ENCODE measurements at regions of chr18 and their contacts with region 1.

Region 1: GRCh38 chr18:63444567-63444966 is 22.3 kb upstream of the VPS4B start:
- DNase-seq: no peak
- ATAC-seq: peak in 1 of 4 donors; percentile 77
- H3K4me3 ChIP-seq: no peak overlapping the region
- H3K27ac ChIP-seq: no peak overlapping the region
- H3K4me1 ChIP-seq: no peaks in the 10 kb centered on the region
- H3K27me3 ChIP-seq: no peaks in the 10 kb centered on the region
- CTCF ChIP-seq: no peak

Region 2: GRCh38 chr18:63016270-63016669 is 428.3 kb before region 1 on chr18:
- intact Hi-C with region 1: loop called in 1 of 3 experiments (anchors 10 kb)
- DNase-seq: peak in 1 of 6 donors; percentile 46
- ATAC-seq: peak in 3 of 4 donors; percentile 83 to 90 (median 87)
- H3K4me3 ChIP-seq: no peak overlapping the region
- H3K27ac ChIP-seq: no peak overlapping the region
- H3K4me1 ChIP-seq: no peaks in the 10 kb centered on the region
- H3K27me3 ChIP-seq: no peaks in the 10 kb centered on the region
- CTCF ChIP-seq: peak; percentile 41 to 71 (median 58)

Region 3: DNA sequence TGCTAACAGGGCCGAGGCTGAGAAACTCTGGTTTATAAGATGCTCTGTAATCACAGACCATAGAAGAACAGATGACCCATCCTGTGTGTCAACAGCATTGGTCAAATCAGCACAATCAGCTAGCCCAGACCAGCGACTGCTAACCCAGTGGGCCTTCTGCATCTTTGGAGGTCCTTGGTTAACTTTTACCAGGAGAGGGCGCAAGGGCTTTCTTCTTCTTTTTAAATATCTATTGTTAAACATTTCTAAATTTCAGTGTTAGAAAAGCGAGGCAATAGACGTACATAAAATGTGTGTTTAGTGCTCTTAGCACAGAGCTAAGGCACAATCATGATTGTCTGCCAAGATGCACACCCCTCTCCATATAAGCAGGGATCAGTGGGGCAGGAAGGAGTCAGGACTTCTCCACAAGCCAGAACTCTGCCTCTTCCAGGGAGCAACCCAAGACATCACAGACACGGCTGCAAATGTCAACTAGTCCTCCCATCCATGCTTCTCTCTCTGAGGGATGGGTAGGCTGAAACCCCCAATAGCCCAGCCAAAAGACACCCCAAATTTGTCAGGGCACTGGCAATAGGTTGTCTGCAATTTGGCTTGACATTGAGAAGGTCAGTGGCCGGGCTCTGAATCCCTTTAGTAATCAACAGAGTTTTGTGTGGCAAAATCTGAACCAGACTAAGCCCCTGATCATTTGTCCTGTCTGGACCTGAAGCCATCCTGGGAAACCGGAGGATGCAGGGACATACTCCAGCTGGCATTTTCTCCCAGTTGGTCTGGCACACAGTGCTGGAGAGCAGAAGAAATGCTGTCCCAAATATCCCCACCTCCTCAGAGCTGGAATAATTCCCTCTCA is 313.2 kb before region 1 on chr18:
- intact Hi-C with region 1: loop called in 1 of 3 experiments (anchors 10 kb)
- DNase-seq: peak in 1 of 6 donors; percentile 34
- ATAC-seq: peak in 3 of 4 donors; percentile 62 to 73 (median 64)
- H3K4me3 ChIP-seq: no peak overlapping the region
- H3K27ac ChIP-seq: no peak overlapping the region
- H3K4me1 ChIP-seq: peaks cover 0 to 5% (median 0%) of the 10 kb centered on the region in 3 donors
- H3K27me3 ChIP-seq: no peaks in the 10 kb centered on the region
- CTCF ChIP-seq: peak; percentile 11 to 45 (median 26)

Region 4: DNA sequence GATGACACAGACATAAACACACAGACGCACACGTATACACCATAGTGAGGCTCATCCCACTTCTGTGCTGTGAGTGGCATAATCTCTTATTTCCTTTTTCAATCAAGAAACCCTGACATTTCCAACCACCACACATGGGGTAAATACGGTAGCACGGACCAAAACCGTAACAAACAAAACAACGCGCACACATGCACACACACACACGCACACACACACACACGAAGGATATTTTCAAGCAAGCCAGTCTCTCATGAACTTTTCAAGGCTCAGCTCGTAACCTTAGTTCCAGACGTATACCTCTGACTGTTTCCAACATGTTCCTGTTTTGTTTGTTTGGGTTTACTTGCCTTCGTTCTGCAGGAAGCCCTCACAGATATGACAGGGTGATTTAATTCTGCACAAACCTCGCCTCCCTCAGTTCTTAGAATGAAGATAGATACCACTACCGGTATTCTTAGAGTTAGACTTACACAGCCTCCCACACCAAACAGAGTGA is 244.8 kb before region 1 on chr18:
- intact Hi-C with region 1: no loop called
- DNase-seq: no peak
- ATAC-seq: peak in 2 of 4 donors; percentile 11 to 19
- H3K4me3 ChIP-seq: no peak overlapping the region
- H3K27ac ChIP-seq: no peak overlapping the region
- H3K4me1 ChIP-seq: no peaks in the 10 kb centered on the region
- H3K27me3 ChIP-seq: no peaks in the 10 kb centered on the region
- CTCF ChIP-seq: no peak

Measured in pancreas (tissue), 10 donors.